Caco-2 (cell line): ENCODE measurements at regions of chr12 and their contacts with region 1.

Region 1: DNA sequence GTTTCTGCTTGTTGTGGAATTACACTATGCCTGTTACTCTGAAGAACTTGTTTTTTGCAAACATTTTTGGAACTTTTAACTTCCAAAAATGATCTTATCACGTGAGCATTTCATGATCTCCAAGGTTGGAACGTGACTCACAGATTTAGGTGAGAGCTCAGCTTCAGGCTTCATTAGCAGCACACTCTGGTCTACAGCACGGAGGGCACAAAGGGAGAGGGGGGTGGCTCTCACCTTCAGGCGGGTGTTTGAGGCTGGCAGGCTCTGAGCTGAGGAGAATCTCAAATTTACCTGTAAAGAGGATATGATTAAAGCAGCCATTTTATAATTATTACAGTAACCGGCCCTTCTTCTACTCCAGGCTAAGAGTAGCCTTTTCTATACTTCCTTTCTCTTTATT is 45.3 kb upstream of the PZP start:
- DNase-seq: no peak
- H3K4me3 ChIP-seq: no peak overlapping the region
- H3K4me3 Mint-ChIP-seq: no peak overlapping the region
- H3K27ac Mint-ChIP-seq: no peak overlapping the region
- H3K4me1 ChIP-seq: no peaks in the 10 kb centered on the region
- H3K4me1 Mint-ChIP-seq: peaks cover 8% of the 10 kb centered on the region
- H3K27me3 ChIP-seq: no peaks in the 10 kb centered on the region
- H3K27me3 Mint-ChIP-seq: peaks cover 12% of the 10 kb centered on the region
- CTCF ChIP-seq: no peak

Region 2: DNA sequence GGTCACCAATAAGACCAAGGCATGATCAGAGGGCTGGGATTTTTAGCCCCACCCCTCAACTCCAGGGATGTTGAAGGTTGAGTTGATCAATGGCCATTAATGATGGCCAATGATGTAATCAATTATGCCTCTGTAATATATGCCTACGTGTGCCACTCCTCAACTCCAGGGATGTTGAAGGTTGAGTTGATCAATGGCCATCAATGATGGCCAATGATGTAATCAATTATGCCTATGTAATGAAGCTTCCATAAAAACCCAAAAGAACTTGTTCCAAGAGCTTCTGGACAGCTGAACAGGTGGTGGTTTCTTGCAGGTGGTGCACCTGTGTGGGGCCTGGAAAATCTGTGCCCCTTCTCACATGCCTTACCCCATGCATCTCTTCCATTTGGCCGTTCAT is 230.9 kb before region 1 on chr12:
- CTCF ChIA-PET with region 1: no interaction called
- POLR2A ChIA-PET with region 1: interaction called, 11 read pairs
- intact Hi-C with region 1: no loop called
- DNase-seq: no peak
- H3K4me3 ChIP-seq: no peak overlapping the region
- H3K4me3 Mint-ChIP-seq: no peak overlapping the region
- H3K27ac Mint-ChIP-seq: no peak overlapping the region
- H3K4me1 ChIP-seq: no peaks in the 10 kb centered on the region
- H3K4me1 Mint-ChIP-seq: no peaks in the 10 kb centered on the region
- H3K27me3 ChIP-seq: no peaks in the 10 kb centered on the region
- H3K27me3 Mint-ChIP-seq: no peaks in the 10 kb centered on the region
- CTCF ChIP-seq: no peak

Region 3: GRCh38 chr12:11067514-11067913 is 1814.0 kb after region 1 on chr12:
- CTCF ChIA-PET with region 1: no interaction called
- POLR2A ChIA-PET with region 1: no interaction called
- intact Hi-C with region 1: no loop called
- DNase-seq: no peak
- H3K4me3 ChIP-seq: no peak overlapping the region
- H3K4me3 Mint-ChIP-seq: no peak overlapping the region
- H3K27ac Mint-ChIP-seq: no peak overlapping the region
- H3K4me1 ChIP-seq: no peaks in the 10 kb centered on the region
- H3K4me1 Mint-ChIP-seq: no peaks in the 10 kb centered on the region
- H3K27me3 ChIP-seq: no peaks in the 10 kb centered on the region
- H3K27me3 Mint-ChIP-seq: no peaks in the 10 kb centered on the region
- CTCF ChIP-seq: no peak